ENCODE measurements at regions of chr15 and their contacts with region 1.

Region 1: DNA sequence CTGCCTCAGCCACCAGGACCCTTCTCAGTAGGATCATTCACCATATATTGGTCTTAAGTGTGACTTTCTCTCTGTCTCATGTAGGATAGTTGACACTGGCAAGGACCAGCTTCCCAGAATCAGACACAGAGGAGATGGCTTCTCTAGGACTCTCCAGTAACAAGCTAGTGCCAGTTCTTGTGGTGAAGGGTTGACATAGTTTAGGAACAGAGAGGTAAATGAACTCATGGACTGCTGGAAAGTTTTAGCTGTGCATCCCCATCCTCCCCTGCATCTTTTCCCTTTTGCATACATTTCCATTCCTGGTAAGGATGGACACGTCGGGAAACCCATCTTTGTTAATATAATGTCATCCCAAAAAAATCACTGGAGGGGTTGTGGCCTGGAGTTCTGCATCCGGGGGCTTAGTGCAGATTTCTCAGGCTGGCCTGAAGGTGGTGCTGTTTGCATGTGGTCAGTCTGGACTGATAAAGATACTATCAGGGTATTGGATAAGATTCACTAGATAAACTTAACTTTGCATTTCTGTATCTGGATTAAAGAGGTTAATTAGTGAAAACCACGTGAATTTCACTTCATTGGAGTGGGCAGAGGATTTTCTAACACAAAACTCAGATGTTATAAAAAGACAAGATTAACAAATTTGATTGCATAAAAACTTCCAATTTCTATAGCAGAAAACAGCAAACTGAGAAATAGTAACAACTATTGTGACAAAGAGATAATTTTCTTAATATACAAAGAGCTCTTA is 110.8 kb downstream of the TBC1D2B start:
- DNase-seq: no peak
- ATAC-seq: peak; percentile 73

Region 2: GRCh38 chr15:77939851-77940250 is 26.9 kb before region 1 on chr15:
- intact Hi-C with region 1: no loop called
- DNase-seq: no peak
- ATAC-seq: no peak

Region 3: DNA sequence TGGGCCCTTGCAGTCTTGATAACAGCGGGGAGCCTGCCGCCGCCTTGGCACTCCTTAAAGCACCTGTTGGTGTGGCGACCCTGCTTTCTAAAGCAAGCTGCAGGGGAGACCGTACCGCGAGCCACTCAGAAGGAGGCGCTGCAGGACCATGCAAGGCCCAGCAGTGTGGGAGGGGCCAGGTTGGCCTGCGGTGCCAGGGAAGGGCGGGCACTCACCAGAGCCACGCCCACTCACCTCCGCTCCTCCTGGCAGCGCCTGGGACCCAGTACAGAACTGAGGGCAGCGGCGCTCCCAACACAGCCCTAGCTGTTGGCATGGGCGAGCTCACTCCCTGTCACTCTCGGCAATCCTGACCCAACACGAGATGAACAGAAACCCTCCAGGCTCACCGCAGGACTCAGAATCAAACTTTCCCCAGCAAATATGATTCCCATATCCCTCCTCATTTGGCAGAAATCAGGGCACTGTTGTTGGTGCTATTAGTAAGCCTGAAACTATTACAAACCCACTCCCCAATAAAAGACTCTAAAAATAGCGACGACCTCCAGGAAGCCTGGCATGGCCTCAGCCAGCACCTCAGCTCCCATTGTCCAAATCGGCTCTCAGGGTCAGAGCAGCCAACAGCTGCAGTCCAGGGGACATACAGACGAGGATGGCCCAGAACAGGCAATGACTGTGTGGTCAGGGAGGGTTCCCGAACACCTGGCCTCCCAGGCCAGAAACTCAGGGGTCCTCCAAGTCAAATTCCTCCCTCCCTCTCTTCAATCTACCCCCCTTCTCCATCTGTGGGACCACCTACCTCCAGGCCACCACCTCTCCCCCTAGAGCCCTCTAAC is 33.6 kb after region 1 on chr15:
- intact Hi-C with region 1: loop called (anchors 5 kb)
- DNase-seq: peak; percentile 94
- ATAC-seq: peak; percentile 49